ENCODE measurements at regions of chr15 and their contacts with region 1.

Region 1: GRCh38 chr15:68730471-68730919 is 90.2 kb downstream of the ANP32A start:
- DNase-seq: peak; percentile 76
- H3K4me3 ChIP-seq: no peak overlapping the region
- H3K27ac ChIP-seq: no peak overlapping the region
- H3K4me1 ChIP-seq: peaks cover 2% of the 10 kb centered on the region
- H3K27me3 ChIP-seq: peaks cover 9 to 11% of the 10 kb centered on the region in 2 experiments
- CTCF ChIP-seq: peak; percentile 35 to 64
- POLR2A ChIP-seq: no peak

Region 2: GRCh38 chr15:68469162-68470048 is 261.1 kb before region 1 on chr15:
- CTCF ChIA-PET with region 1: no interaction called
- POLR2A ChIA-PET with region 1: no interaction called
- dilution Hi-C with region 1: no loop called
- intact Hi-C with region 1: no loop called
- DNase-seq: peak; percentile 21
- H3K4me3 ChIP-seq: no peak overlapping the region
- H3K27ac ChIP-seq: no peak overlapping the region
- H3K4me1 ChIP-seq: no peaks in the 10 kb centered on the region
- H3K27me3 ChIP-seq: peaks cover 2 to 7% of the 10 kb centered on the region in 2 experiments
- CTCF ChIP-seq: no peak
- POLR2A ChIP-seq: no peak

Region 3: DNA sequence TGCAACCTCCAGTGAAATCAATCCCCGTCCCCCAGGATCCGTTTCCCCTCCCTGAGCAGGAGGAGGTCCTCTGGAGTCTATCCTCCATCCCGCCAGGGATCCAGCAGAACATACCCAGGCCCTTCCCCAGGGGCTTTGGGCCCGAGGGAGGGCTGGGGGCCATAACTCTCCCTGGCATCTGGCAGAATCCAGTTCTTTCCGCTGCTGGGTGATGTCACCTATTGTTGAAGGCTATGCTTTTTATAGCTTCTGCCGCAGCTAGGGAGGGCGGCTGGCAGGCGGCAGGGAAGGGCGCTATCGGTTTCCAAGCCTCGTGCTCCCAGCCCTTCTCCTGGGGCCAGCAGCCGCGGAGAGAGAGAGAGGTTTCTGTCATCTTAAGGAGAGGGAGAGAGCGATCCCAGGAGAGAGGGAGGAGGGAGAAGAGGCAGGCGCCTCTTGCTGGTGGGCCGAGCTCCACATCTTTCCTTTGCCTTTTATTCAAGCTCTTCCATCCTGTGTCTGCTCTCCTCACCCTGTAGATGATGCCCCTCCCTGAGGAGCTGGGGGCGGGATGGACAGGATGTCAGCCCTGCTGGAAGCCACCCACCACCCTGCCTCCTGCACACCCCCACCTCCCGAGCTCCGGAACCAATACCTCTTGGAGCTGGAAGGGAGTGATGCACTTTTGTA is 29.9 kb before region 1 on chr15:
- CTCF ChIA-PET with region 1: no interaction called
- POLR2A ChIA-PET with region 1: no interaction called
- dilution Hi-C with region 1: no loop called
- intact Hi-C with region 1: loop called (anchors 1 kb)
- DNase-seq: peak; percentile 83
- H3K4me3 ChIP-seq: no peak overlapping the region
- H3K27ac ChIP-seq: no peak overlapping the region
- H3K4me1 ChIP-seq: peaks cover 24% of the 10 kb centered on the region
- H3K27me3 ChIP-seq: no peaks in the 10 kb centered on the region
- CTCF ChIP-seq: no peak
- POLR2A ChIP-seq: no peak

Region 4: GRCh38 chr15:68775671-68776476 is 45.4 kb after region 1 on chr15:
- CTCF ChIA-PET with region 1: no interaction called
- POLR2A ChIA-PET with region 1: no interaction called
- dilution Hi-C with region 1: no loop called
- intact Hi-C with region 1: no loop called
- DNase-seq: peak; percentile 48
- H3K4me3 ChIP-seq: no peak overlapping the region
- H3K27ac ChIP-seq: no peak overlapping the region
- H3K4me1 ChIP-seq: no peaks in the 10 kb centered on the region
- H3K27me3 ChIP-seq: no peaks in the 10 kb centered on the region
- CTCF ChIP-seq: no peak
- POLR2A ChIP-seq: no peak

Region 5: DNA sequence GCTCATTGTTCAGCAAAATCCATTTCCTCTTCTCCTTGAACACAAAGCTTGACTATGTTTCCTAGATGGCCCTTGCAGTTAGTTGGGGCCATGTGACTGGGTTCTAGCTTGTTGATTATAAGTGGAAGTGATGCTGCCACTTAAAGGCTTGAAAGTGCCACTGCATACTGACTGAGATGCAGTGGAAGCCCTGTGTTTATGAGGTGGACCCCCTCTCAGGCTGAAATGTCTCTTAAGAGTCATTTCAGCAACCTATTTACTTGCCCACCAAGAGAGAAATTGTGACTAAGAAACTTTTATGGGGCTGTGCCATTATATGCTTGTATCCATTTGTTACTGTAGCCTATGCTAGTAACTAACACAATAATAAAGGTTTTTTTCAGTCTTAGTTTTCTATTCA is 98.6 kb after region 1 on chr15:
- CTCF ChIA-PET with region 1: interaction called, 28 read pairs
- POLR2A ChIA-PET with region 1: interaction called, 3 read pairs
- dilution Hi-C with region 1: no loop called
- intact Hi-C with region 1: loop called (anchors 1 kb)
- DNase-seq: peak; percentile 81
- H3K4me3 ChIP-seq: no peak overlapping the region
- H3K27ac ChIP-seq: no peak overlapping the region
- H3K4me1 ChIP-seq: no peaks in the 10 kb centered on the region
- H3K27me3 ChIP-seq: peaks cover 13 to 19% of the 10 kb centered on the region in 2 experiments
- CTCF ChIP-seq: peak; percentile 29 to 57
- POLR2A ChIP-seq: no peak